ENCODE measurements at regions of chr5 and their contacts with region 1.

Region 1: DNA sequence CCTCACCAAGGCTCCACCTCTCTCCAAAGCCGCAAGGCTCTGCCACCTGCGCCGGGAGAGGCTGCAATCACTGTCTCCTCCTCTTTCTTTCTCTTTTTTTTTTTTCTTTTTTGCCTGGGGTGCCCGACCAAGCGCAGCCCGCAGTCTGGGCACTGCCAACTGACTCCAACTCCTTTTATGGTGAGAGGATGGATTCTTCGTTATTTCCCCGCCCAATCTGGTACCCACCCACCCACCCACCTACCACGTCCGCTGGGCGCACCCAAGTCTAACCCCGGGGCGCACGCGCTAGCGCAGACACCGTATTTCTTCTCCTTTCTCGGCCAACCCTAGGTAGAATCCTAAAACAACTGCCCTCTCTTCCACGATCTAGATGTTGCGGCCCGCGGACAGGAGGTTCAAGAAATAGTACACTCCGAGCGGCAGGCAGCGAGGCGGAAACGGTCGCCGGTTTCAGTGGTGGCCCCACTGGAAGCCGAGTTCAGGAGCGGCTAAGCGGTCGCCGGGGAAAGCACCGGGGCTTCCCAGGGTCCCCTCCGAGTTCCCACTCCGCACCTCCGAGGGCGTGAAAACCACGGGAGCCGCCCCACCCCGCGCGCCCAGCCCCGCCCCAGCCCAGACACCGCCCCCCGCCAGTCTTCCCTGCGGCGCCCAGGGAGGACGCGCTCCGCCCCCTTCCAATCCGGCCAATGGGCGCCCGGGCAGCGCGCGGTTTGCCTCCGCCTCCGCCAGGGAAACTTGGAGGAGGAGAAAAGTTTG is 381 bp upstream of the PTGER4 start:
- DNase-seq: peak; percentile 90 to 92 (median 90)
- H3K4me3 ChIP-seq: peak overlapping the region; percentile 74 to 92
- H3K4me3 Mint-ChIP-seq: peak overlapping the region; percentile 92 to 100 (median 99)
- H3K27ac ChIP-seq: peak overlapping the region; percentile 86
- H3K27ac Mint-ChIP-seq: peak overlapping the region; percentile 87 to 99 (median 98)
- H3K4me1 ChIP-seq: peaks cover 46% of the 10 kb centered on the region
- H3K4me1 Mint-ChIP-seq: peaks cover 34 to 70% (median 46%) of the 10 kb centered on the region in 4 donors
- H3K27me3 ChIP-seq: no peaks in the 10 kb centered on the region
- H3K27me3 Mint-ChIP-seq: no peaks in the 10 kb centered on the region

Region 2: DNA sequence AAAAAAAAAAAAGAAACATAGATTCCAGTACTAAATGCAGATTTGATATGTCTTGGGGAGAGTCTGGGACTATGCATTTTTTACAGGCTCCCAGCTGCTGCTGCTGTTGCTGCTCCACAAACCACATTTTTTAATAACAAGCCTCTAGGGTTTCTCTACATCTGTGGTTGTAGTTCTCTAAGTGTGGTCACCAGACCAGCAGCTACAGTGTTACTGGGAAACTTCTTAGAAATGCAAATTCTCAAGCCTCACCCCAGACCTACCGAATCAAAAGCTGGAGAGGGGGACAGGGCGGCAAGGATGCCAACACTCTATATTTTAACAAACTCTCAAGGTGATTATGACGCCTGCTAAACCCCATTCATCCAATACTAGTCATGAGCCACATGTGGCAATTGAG is 293.0 kb before region 1 on chr5:
- CTCF ChIA-PET with region 1: interaction called, 6 read pairs
- POLR2A ChIA-PET with region 1: interaction called, 15 read pairs
- intact Hi-C with region 1: loop called (anchors 2 kb)
- DNase-seq: peak in 4 of 5 donors; percentile 55 to 68 (median 57)
- H3K4me3 ChIP-seq: no peak overlapping the region
- H3K4me3 Mint-ChIP-seq: peak overlapping the region in 6 of 8 donors; percentile 9 to 76 (median 51)
- H3K27ac ChIP-seq: peak overlapping the region; percentile 28
- H3K27ac Mint-ChIP-seq: peak overlapping the region; percentile 70 to 96 (median 84)
- H3K4me1 ChIP-seq: peaks cover 91% of the 10 kb centered on the region
- H3K4me1 Mint-ChIP-seq: peaks cover 75 to 93% (median 82%) of the 10 kb centered on the region in 4 donors
- H3K27me3 ChIP-seq: no peaks in the 10 kb centered on the region
- H3K27me3 Mint-ChIP-seq: no peaks in the 10 kb centered on the region

Region 3: DNA sequence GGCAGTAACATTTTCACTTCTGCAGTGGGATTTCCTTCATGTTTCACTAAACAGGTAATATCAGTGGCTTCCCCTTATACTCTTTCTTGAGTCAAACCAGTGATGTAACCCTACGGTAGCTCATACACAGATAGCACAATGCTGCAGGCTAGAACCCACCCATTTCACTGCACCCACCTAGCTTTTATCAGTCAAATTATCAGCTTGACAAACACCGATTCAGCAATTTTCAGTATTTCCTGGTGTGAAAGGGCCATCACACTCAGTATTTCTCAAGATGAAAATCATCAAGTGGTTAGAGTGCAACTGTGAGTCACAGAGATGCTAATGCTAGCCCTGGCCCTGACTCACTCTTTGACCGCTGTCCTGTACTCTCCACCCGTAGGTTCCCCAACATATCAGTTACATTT is 241.9 kb before region 1 on chr5:
- CTCF ChIA-PET with region 1: interaction called, 15 read pairs
- POLR2A ChIA-PET with region 1: interaction called, 29 read pairs
- intact Hi-C with region 1: loop called (anchors 2 kb)
- DNase-seq: peak in 4 of 5 donors; percentile 10 to 63 (median 22)
- H3K4me3 ChIP-seq: peak overlapping the region in 1 of 2 donors; percentile 17
- H3K4me3 Mint-ChIP-seq: peak overlapping the region in 5 of 8 donors; percentile 5 to 73 (median 58)
- H3K27ac ChIP-seq: peak overlapping the region; percentile 67
- H3K27ac Mint-ChIP-seq: peak overlapping the region; percentile 82 to 97 (median 94)
- H3K4me1 ChIP-seq: peaks cover 48% of the 10 kb centered on the region
- H3K4me1 Mint-ChIP-seq: peaks cover 51 to 76% (median 63%) of the 10 kb centered on the region in 4 donors
- H3K27me3 ChIP-seq: no peaks in the 10 kb centered on the region
- H3K27me3 Mint-ChIP-seq: no peaks in the 10 kb centered on the region

Region 4: GRCh38 chr5:40540301-40540700 is 139.0 kb before region 1 on chr5:
- CTCF ChIA-PET with region 1: no interaction called
- POLR2A ChIA-PET with region 1: no interaction called
- intact Hi-C with region 1: no loop called
- DNase-seq: no peak
- H3K4me3 ChIP-seq: no peak overlapping the region
- H3K4me3 Mint-ChIP-seq: no peak overlapping the region
- H3K27ac ChIP-seq: no peak overlapping the region
- H3K27ac Mint-ChIP-seq: peak overlapping the region in 1 of 7 donors; percentile 35
- H3K4me1 ChIP-seq: no peaks in the 10 kb centered on the region
- H3K4me1 Mint-ChIP-seq: peaks cover 0 to 6% (median 0%) of the 10 kb centered on the region in 4 donors
- H3K27me3 ChIP-seq: no peaks in the 10 kb centered on the region
- H3K27me3 Mint-ChIP-seq: no peaks in the 10 kb centered on the region

Region 5: DNA sequence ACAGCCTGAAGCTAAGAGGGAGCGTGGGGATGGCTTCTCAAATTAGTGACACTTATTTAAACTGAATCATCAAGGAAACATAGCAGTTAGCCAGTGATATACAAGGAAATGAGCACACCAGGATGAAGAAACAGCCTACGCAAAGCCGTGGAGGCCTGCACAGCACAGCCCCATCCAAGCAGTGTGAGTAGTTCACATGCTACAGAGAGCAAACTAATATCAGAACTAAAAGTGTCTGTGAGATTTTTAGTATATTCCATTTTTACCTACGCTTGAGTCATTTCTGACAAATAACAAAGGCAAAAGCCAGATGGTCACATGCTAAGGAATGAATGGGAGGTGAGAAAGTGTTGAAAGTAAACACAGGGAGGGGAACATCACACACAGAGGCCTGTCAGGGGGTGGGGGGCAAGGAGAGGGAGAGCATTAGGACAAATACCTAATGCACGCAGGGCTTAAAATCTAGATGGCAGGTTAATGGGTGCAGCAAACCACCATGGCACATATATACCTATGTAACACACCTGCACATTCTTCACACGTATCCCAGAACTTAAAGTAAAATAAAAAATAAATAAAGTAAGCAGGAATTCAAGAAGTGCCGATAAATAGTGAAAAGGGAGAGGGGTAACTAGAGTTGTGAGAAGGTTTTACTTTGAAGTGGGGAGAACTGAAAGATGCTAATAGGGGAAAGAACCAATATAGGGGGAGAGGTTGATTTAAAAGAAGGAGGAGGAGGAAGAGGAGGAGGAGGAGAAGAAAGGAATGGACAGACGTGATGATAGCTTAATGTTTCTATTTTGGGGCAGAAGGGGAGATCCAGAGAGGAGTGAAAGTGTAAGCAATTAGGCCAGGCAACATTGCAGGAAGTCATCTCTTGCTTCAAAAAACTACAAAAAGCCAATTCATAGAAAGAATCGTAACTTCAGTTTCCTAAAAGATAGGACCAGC is 100.6 kb before region 1 on chr5:
- CTCF ChIA-PET with region 1: interaction called, 3 read pairs
- POLR2A ChIA-PET with region 1: interaction called, 3 read pairs
- intact Hi-C with region 1: loop called (anchors 2 kb)
- DNase-seq: peak in 2 of 5 donors; percentile 2 to 5
- H3K4me3 ChIP-seq: no peak overlapping the region
- H3K4me3 Mint-ChIP-seq: peak overlapping the region; percentile 70 to 87 (median 82)
- H3K27ac ChIP-seq: no peak overlapping the region
- H3K27ac Mint-ChIP-seq: peak overlapping the region in 6 of 7 donors; percentile 25 to 90 (median 67)
- H3K4me1 ChIP-seq: peaks cover 13% of the 10 kb centered on the region
- H3K4me1 Mint-ChIP-seq: peaks cover 15 to 23% (median 17%) of the 10 kb centered on the region in 4 donors
- H3K27me3 ChIP-seq: no peaks in the 10 kb centered on the region
- H3K27me3 Mint-ChIP-seq: peaks cover 0 to 2% of the 10 kb centered on the region in 2 donors

Region 6: GRCh38 chr5:40623480-40624420 is 55.6 kb before region 1 on chr5:
- CTCF ChIA-PET with region 1: interaction called, 3 read pairs
- POLR2A ChIA-PET with region 1: interaction called, 31 read pairs
- intact Hi-C with region 1: loop called (anchors 1 kb)
- DNase-seq: peak; percentile 60 to 67 (median 64)
- H3K4me3 ChIP-seq: no peak overlapping the region
- H3K4me3 Mint-ChIP-seq: peak overlapping the region in 7 of 8 donors; percentile 0 to 65 (median 49)
- H3K27ac ChIP-seq: no peak overlapping the region
- H3K27ac Mint-ChIP-seq: peak overlapping the region; percentile 68 to 96 (median 85)
- H3K4me1 ChIP-seq: peaks cover 29% of the 10 kb centered on the region
- H3K4me1 Mint-ChIP-seq: peaks cover 40 to 57% (median 46%) of the 10 kb centered on the region in 4 donors
- H3K27me3 ChIP-seq: no peaks in the 10 kb centered on the region
- H3K27me3 Mint-ChIP-seq: no peaks in the 10 kb centered on the region

Region 7: GRCh38 chr5:40755407-40756365 is 76.4 kb after region 1 on chr5 and contains the start of gene TTC33:
- CTCF ChIA-PET with region 1: no interaction called
- POLR2A ChIA-PET with region 1: no interaction called
- intact Hi-C with region 1: loop called (anchors 1 kb)
- DNase-seq: peak; percentile 90 to 97 (median 92)
- H3K4me3 ChIP-seq: peak within 1 kb of the TSS; percentile 93 to 95
- H3K4me3 Mint-ChIP-seq: no peak within 1 kb of the TSS
- H3K27ac ChIP-seq: peak within 1 kb of the TSS; percentile 90
- H3K27ac Mint-ChIP-seq: peak within 1 kb of the TSS in 1 of 7 donors; percentile 68
- H3K4me1 ChIP-seq: peaks cover 21% of the 10 kb centered on the region
- H3K4me1 Mint-ChIP-seq: peaks cover 8 to 29% (median 16%) of the 10 kb centered on the region in 4 donors
- H3K27me3 ChIP-seq: no peaks in the 10 kb centered on the region
- H3K27me3 Mint-ChIP-seq: no peaks in the 10 kb centered on the region
- total RNA-seq, gene TTC33: 15.2 to 16.2 TPM